Left cardiac atrium (tissue), 4 donors: ENCODE measurements at regions of chr1 and their contacts with region 1.

Region 1: GRCh38 chr1:37434292-37434907 is 40.0 kb upstream of the ZC3H12A start:
- DNase-seq: peak; percentile 72
- ATAC-seq: peak; percentile 68 to 82

Region 2: GRCh38 chr1:36553591-36554322 is 880.6 kb before region 1 on chr1:
- intact Hi-C with region 1: loop called in 1 of 2 experiments (anchors 10 kb)
- DNase-seq: peak; percentile 62
- ATAC-seq: peak in 1 of 2 donors; percentile 75

Region 3: GRCh38 chr1:36576118-36576517 is 858.3 kb before region 1 on chr1:
- intact Hi-C with region 1: loop called in 1 of 2 experiments (anchors 5 kb)
- DNase-seq: peak; percentile 57
- ATAC-seq: peak; percentile 72 to 83

Region 4: DNA sequence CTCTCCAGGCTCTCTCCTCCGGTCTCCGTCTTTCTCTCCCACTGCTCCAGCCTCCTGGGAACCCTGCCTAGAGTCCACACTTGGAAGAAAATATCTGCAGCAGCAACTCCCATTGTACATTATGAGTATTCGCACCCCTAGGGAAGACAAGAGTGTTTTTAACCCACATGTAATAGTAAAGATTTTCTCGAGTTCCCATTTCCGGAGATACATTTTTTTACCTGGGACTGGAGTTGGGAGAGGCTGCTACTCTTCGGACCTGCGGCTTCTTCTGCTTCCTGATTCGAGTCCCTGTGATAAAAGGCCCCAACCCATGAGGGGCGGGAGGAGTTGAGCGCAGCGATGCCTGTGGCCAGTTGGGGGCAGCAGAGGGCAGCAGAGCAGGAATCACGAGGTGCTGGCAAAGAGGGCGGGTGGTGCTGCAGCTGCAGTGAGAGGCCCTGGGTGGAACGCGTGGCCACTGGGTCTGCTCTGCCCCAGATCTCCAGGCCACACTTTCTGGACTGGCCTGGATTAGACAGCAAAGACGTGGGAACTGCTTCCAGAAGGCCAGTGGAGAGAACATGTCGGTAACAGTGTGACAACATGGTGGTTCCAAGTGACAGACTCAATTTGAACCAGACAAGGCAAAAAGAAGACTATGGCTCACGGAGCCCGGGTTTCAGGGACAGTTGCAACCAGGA is 730.7 kb before region 1 on chr1:
- intact Hi-C with region 1: loop called (anchors 2 to 10 kb)
- DNase-seq: peak; percentile 78
- ATAC-seq: peak; percentile 88 to 93

Region 5: GRCh38 chr1:37595440-37596319 is 161.3 kb after region 1 on chr1 and contains the start of gene GNL2:
- intact Hi-C with region 1: no loop called
- DNase-seq: peak; percentile 99
- ATAC-seq: peak; percentile 100
- total RNA-seq, gene GNL2: 21.1 to 34.0 TPM